ENCODE measurements at regions of chr12 and their contacts with region 1.

Region 1: DNA sequence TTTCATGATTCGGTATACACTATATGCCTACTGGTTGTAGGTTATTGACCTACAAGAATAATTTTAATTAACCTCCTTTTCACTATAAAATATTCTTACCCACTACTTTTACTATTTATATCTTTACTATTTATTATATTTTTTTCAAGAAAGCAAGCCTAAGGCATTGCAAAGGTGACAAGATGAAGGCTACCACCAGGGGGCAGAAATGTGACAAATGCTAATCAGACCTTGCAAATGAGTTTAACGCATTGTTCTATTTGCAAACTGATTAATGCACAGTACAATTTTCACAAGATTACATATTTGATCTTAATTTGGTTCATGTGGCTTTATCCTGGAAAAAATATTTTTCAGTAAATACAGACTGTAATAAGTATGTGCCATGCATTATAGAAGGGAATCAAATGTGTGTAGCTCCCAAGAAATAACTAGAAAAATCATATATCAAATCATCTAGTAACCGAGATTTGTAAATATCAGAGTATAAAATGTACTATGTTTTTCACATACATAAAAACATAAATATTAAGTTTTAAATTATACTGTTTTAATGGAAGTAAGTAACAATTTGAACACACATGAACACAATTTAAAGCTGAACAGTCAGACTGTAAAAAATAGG is 107.0 kb downstream of the ADAMTS20 start:
- DNase-seq: peak in 4 of 6 donors; percentile 8 to 51 (median 24)
- ATAC-seq: peak in 2 of 4 donors; percentile 49 to 60
- H3K4me3 ChIP-seq: no peak overlapping the region
- H3K27ac ChIP-seq: no peak overlapping the region
- H3K4me1 ChIP-seq: no peaks in the 10 kb centered on the region
- H3K27me3 ChIP-seq: peaks cover 0 to 2% (median 0%) of the 10 kb centered on the region in 4 donors
- CTCF ChIP-seq: peak; percentile 40 to 61 (median 56)

Region 2: DNA sequence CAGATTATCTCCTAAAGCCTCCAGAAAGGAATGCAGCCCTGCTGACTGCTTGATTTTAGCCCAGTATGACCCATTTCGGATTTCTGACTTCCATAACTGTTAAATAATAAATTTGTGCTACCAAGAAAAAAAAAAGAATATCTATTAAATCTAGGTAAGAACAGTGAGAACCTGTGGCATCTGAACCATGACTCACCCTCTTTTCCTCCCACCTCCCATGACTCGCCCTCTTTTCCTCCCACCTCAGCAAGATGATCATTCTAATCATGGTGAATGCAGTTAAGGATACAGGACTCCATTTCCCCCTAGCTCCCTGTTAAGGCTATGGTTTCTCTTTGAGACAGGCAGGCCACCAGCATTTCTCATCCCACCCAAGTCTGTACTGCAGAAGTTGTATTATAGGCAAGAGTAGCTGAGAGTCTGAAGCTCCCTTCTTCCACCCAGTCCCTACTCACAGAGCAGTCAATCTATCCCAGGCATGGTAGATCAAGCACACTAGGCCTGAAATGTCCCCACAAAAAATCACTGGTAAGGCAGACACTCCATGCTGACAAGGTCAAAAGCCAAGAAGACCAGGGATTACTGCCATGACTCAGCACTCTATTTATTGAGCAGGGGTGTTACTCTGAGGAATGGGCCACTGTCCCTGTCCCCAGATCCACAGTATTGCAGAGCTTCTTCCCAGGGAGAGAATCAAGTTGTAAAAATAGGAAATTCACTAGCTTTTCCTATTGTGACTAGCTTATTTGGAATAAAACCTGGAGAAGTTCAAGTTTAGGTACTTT is 82.0 kb before region 1 on chr12:
- intact Hi-C with region 1: no loop called
- DNase-seq: no peak
- ATAC-seq: no peak
- H3K4me3 ChIP-seq: no peak overlapping the region
- H3K27ac ChIP-seq: no peak overlapping the region
- H3K4me1 ChIP-seq: no peaks in the 10 kb centered on the region
- H3K27me3 ChIP-seq: no peaks in the 10 kb centered on the region
- CTCF ChIP-seq: no peak

Region 3: GRCh38 chr12:43578782-43579181 is 133.7 kb after region 1 on chr12:
- intact Hi-C with region 1: no loop called
- DNase-seq: no peak
- ATAC-seq: no peak
- H3K4me3 ChIP-seq: no peak overlapping the region
- H3K27ac ChIP-seq: no peak overlapping the region
- H3K4me1 ChIP-seq: no peaks in the 10 kb centered on the region
- H3K27me3 ChIP-seq: peaks cover 0 to 5% (median 0%) of the 10 kb centered on the region in 4 donors
- CTCF ChIP-seq: no peak

Region 4: DNA sequence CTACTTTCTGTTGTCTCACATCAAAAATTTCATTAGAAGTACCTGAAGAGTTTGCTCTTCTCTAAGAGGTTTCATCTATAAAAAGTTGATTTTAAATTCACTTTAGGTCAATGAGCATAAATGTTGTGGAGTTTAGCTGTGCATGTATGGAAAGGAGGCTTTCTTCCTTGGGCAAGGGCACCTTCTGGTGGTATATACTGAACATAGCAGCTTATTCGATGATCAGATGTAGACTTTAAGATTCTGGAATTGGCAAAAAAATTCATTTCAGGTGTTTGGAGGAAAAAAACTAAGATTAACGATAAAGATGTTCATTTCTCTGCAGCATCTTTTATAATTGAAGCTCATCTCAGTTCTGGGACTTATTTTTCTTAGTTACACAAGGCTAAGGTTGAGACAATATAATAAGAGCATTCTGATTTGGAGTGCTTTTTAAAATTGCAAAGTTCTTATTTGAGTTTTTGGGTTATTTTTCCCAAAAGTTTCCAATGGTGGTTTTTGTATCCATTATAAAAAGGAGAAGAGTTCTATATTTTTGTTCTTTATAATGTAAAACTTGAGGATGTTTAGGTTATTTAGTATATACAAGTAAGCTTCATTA is 437.6 kb after region 1 on chr12:
- intact Hi-C with region 1: loop called in 1 of 3 experiments (anchors 10 kb)
- DNase-seq: peak in 2 of 6 donors; percentile 8 to 22
- ATAC-seq: peak; percentile 87 to 94 (median 91)
- H3K4me3 ChIP-seq: no peak overlapping the region
- H3K27ac ChIP-seq: no peak overlapping the region
- H3K4me1 ChIP-seq: no peaks in the 10 kb centered on the region
- H3K27me3 ChIP-seq: no peaks in the 10 kb centered on the region
- CTCF ChIP-seq: peak in 3 of 4 donors; percentile 24 to 60 (median 58)

Region 5: DNA sequence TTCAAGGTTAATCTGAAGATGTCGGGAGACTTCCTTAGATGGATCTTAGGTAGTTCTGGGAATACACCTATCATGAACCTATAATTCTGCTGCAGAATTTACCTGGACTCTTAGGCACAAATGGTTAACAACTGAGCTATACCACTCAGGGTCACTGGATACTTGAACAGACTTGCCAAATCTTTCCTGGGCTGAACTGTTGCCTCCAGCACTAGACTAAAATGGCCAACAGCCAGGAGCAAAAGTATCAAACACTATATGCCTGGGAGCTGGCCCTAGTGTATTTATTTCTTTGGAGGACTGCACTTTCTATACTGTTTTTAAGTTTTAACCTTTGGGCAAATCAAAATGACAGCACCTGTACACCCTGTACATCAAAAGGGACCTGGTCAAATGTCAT is 643.6 kb after region 1 on chr12:
- intact Hi-C with region 1: no loop called
- DNase-seq: no peak
- ATAC-seq: no peak
- H3K4me3 ChIP-seq: no peak overlapping the region
- H3K27ac ChIP-seq: no peak overlapping the region
- H3K4me1 ChIP-seq: no peaks in the 10 kb centered on the region
- H3K27me3 ChIP-seq: no peaks in the 10 kb centered on the region
- CTCF ChIP-seq: no peak

Measured in pancreas (tissue), 10 donors.